T-cell (primary cell): ENCODE measurements at regions of chr13 and their contacts with region 1.

Region 1: GRCh38 chr13:77274126-77274525 is 52.8 kb downstream of the MYCBP2 start:
- DNase-seq: peak in 1 of 35 experiments; percentile 11
- ATAC-seq: no peak
- H3K4me3 ChIP-seq: no peak overlapping the region
- H3K4me3 Mint-ChIP-seq: no peak overlapping the region
- H3K27ac ChIP-seq: no peak overlapping the region
- H3K27ac Mint-ChIP-seq: peak overlapping the region in 1 of 2 donors; percentile 61
- H3K4me1 ChIP-seq: no peaks in the 10 kb centered on the region
- H3K4me1 Mint-ChIP-seq: peaks cover 7 to 16% (median 16%) of the 10 kb centered on the region in 3 donors
- H3K27me3 ChIP-seq: no peaks in the 10 kb centered on the region
- H3K27me3 Mint-ChIP-seq: no peaks in the 10 kb centered on the region

Region 2: DNA sequence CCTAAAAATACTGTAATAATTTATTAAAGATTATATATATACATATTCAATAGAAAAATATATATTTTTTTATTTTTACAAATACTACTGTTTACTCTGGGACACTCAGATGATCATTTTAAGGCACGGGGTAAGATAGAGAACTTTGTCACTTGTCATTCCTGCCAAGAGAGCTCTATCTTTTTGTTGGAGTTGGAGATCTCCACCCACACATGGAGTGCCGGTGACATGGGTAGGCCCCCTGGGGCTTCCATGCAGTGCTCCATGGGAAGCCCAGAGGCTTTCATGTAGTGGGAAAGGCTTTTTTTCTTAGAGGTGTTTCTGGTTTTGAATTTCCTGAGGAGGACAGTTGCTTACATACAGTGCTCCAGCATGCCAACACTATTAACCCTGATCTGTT is 1556.6 kb before region 1 on chr13:
- CTCF ChIA-PET with region 1: interaction called in 1 of 2 experiments, 13 read pairs
- POLR2A ChIA-PET with region 1: no interaction called
- DNase-seq: no peak
- ATAC-seq: no peak
- H3K4me3 ChIP-seq: no peak overlapping the region
- H3K4me3 Mint-ChIP-seq: no peak overlapping the region
- H3K27ac ChIP-seq: no peak overlapping the region
- H3K27ac Mint-ChIP-seq: no peak overlapping the region
- H3K4me1 ChIP-seq: no peaks in the 10 kb centered on the region
- H3K4me1 Mint-ChIP-seq: peaks cover 0 to 2% (median 0%) of the 10 kb centered on the region in 3 donors
- H3K27me3 ChIP-seq: no peaks in the 10 kb centered on the region
- H3K27me3 Mint-ChIP-seq: no peaks in the 10 kb centered on the region